Cardiac septum (tissue), 1 donor: ENCODE measurements at regions of chr19 and their contacts with region 1.

Region 1: GRCh38 chr19:17511724-17512573 is 500 bp downstream of the PGLS start:
- DNase-seq: peak; percentile 94

Region 2: GRCh38 chr19:17429641-17430113 is 82.3 kb before region 1 on chr19:
- intact Hi-C with region 1: no loop called
- DNase-seq: no peak

Region 3: DNA sequence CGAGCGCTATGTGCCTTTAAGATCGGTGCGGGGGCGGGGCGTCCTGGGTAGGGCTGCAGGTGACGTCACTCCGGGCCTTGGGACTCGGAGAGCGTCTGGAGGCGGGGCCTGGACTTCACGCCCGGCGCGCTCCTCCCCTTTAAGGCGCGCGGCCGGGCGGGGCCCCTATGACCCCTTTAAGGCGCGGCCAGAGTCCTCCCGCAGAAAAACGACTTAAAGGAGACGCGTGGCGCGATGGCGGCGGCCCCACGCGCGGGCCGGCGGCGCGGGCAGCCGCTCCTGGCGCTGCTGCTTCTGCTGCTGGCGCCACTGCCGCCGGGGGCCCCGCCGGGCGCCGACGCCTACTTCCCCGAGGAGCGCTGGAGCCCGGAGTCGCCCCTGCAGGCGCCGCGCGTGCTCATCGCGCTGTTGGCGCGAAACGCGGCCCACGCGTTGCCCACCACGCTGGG is 43.6 kb after region 1 on chr19 and contains the start of gene COLGALT1:
- intact Hi-C with region 1: loop called (anchors 2 kb)
- DNase-seq: peak; percentile 99
- total RNA-seq, gene COLGALT1: 41.1 TPM

Region 4: DNA sequence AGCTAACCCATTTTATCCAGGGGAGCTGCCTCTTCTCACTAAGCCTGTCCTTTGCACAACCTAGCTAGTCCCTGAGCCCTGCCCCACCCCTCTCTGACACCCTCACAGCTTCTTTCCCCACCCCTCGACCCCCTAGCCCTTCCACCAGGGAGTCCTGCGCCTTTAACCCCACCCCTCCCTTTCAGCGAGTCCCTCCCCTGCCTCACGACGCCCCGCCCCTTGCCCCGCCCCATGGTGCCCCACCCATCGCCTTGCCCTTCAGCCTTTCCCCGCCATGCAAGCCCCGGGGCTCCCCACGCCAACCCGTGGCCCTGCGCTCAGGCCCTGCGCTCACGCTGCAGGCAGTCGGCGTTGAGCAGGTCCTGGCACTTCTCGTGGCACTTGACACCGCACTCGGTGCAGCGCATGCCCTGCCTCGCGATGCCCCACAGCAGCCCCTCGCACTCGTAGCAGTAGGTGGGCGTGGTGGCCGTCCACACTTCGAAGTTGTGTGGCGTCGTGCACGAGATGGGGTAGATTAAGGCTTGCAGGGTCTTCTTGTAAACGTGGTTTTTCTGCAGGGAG is 136.2 kb after region 1 on chr19:
- intact Hi-C with region 1: no loop called
- DNase-seq: no peak